Activated CD4-positive, alpha-beta memory T cell treated with anti-CD3 and anti-CD28 coated beads for 36 hours (primary cell): ENCODE measurements at regions of chr2 and their contacts with region 1.

Region 1: GRCh38 chr2:68925295-68925896 is 27.3 kb downstream of the GKN2 start:
- DNase-seq: peak; percentile 57
- H3K4me3 Mint-ChIP-seq: no peak overlapping the region
- H3K27ac Mint-ChIP-seq: no peak overlapping the region
- H3K4me1 Mint-ChIP-seq: peaks cover 6% of the 10 kb centered on the region
- H3K27me3 Mint-ChIP-seq: no peaks in the 10 kb centered on the region

Region 2: GRCh38 chr2:68721482-68722101 is 203.8 kb before region 1 on chr2:
- CTCF ChIA-PET with region 1: interaction called, 28 read pairs
- POLR2A ChIA-PET with region 1: no interaction called
- intact Hi-C with region 1: no loop called
- DNase-seq: peak; percentile 62
- H3K4me3 Mint-ChIP-seq: peak overlapping the region; percentile 61
- H3K27ac Mint-ChIP-seq: peak overlapping the region; percentile 85
- H3K4me1 Mint-ChIP-seq: peaks cover 90% of the 10 kb centered on the region
- H3K27me3 Mint-ChIP-seq: no peaks in the 10 kb centered on the region

Region 3: GRCh38 chr2:68828887-68829708 is 96.3 kb before region 1 on chr2:
- CTCF ChIA-PET with region 1: interaction called, 11 read pairs
- POLR2A ChIA-PET with region 1: no interaction called
- intact Hi-C with region 1: no loop called
- DNase-seq: peak; percentile 86
- H3K4me3 Mint-ChIP-seq: peak overlapping the region; percentile 21
- H3K27ac Mint-ChIP-seq: peak overlapping the region; percentile 79
- H3K4me1 Mint-ChIP-seq: peaks cover 64% of the 10 kb centered on the region
- H3K27me3 Mint-ChIP-seq: no peaks in the 10 kb centered on the region

Region 4: GRCh38 chr2:68849579-68850030 is 75.8 kb before region 1 on chr2:
- CTCF ChIA-PET with region 1: interaction called, 12 read pairs
- POLR2A ChIA-PET with region 1: no interaction called
- intact Hi-C with region 1: no loop called
- DNase-seq: no peak
- H3K4me3 Mint-ChIP-seq: no peak overlapping the region
- H3K27ac Mint-ChIP-seq: no peak overlapping the region
- H3K4me1 Mint-ChIP-seq: no peaks in the 10 kb centered on the region
- H3K27me3 Mint-ChIP-seq: peaks cover 14% of the 10 kb centered on the region